Vagina (tissue), 2 donors: ENCODE measurements at regions of chr6 and their contacts with region 1.

Region 1: GRCh38 chr6:166289207-166290060 is 18.8 kb downstream of the PRR18 start:
- DNase-seq: no peak
- H3K4me3 ChIP-seq: no peak overlapping the region
- H3K27ac ChIP-seq: no peak overlapping the region
- H3K4me1 ChIP-seq: no peaks in the 10 kb centered on the region
- H3K27me3 ChIP-seq: no peaks in the 10 kb centered on the region
- CTCF ChIP-seq: no peak
- POLR2A ChIP-seq: no peak

Region 2: GRCh38 chr6:165110860-165111259 is 1178.6 kb before region 1 on chr6:
- intact Hi-C with region 1: loop called (anchors 5 kb)
- DNase-seq: no peak
- H3K4me3 ChIP-seq: no peak overlapping the region
- H3K27ac ChIP-seq: no peak overlapping the region
- H3K4me1 ChIP-seq: no peaks in the 10 kb centered on the region
- H3K27me3 ChIP-seq: no peaks in the 10 kb centered on the region
- CTCF ChIP-seq: no peak
- POLR2A ChIP-seq: no peak